Stomach (tissue), 19 donors: ENCODE measurements at regions of chr12 and their contacts with region 1.

Region 1: DNA sequence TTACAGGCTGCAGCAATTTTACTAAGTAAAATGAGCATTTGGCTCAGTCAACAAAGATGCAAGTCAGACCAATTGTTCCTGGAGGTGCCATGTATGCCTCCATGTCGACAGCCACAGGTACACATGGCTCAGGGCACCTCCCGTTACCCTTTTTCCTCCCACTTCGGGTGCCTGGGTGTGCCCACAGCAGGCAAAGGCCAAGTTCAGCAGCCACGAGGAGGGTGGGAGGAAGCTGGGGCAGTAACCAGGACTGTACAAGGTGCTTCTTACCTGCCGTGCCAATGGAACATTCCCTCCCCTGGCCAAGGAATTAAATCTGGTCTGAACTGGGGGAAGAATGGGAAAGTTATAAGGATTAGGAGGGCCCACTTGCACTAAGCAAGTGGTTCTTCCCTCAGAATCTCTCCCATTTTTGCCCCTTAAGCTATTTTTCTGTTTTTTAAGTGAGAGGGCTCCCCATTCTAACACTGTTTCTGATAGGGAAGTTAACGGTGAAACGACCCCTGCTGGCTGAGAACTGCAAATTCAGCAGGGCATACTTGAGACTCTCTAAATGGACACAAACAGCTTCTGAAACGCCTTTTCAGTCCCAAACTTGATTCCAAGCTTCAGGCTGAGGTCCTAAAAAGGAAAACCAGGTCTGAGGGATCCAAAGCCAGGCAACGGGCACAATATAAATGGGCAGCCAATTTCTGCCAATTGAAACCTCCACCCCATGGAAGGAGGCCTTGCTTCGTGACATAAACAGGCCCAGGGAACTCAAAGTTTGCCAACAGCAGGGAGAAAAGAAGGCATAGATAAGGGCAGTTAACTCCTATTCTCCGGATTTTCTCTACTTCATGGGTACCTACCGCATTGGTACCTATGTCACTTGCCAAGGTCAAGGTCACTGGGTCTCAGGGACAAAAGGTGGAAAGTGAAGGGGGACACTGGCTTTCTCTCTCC is 24.8 kb downstream of the CLECL1 start:
- DNase-seq: peak; percentile 58 to 72
- H3K4me3 ChIP-seq: no peak overlapping the region
- H3K27ac ChIP-seq: peak overlapping the region in 3 of 5 donors; percentile 28 to 44 (median 35)
- H3K4me1 ChIP-seq: peaks cover 0 to 14% (median 2%) of the 10 kb centered on the region in 4 donors
- H3K27me3 ChIP-seq: no peaks in the 10 kb centered on the region
- CTCF ChIP-seq: peak in 5 of 7 experiments; percentile 68 to 82 (median 76)
- EP300 ChIP-seq: no peak
- POLR2A ChIP-seq: no peak

Region 2: DNA sequence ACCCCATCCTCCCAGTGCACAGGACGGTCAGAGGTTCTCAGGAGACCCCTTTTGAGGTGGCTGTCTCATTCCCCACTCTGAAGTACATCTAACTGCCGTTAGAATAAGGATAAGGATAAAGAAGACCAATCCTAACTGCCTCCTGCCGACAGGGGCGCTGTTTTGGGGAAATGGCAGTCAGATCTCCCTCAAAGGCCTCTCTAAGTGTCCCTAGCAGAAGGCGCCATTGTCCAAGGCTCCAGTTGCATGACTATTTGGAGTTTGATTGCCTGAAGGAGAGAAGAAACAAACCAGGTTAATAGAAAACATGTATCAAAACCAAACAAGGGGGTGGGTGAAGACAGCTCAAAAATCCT is 71.3 kb before region 1 on chr12:
- intact Hi-C with region 1: loop called (anchors 5 kb)
- DNase-seq: no peak
- H3K4me3 ChIP-seq: no peak overlapping the region
- H3K27ac ChIP-seq: no peak overlapping the region
- H3K4me1 ChIP-seq: peaks cover 0 to 12% (median 0%) of the 10 kb centered on the region in 4 donors
- H3K27me3 ChIP-seq: no peaks in the 10 kb centered on the region
- CTCF ChIP-seq: no peak
- EP300 ChIP-seq: no peak
- POLR2A ChIP-seq: no peak

Region 3: GRCh38 chr12:10293570-10294227 is 585.6 kb after region 1 on chr12:
- intact Hi-C with region 1: no loop called
- DNase-seq: peak in 1 of 2 donors; percentile 36
- H3K4me3 ChIP-seq: no peak overlapping the region
- H3K27ac ChIP-seq: no peak overlapping the region
- H3K4me1 ChIP-seq: no peaks in the 10 kb centered on the region
- H3K27me3 ChIP-seq: no peaks in the 10 kb centered on the region
- CTCF ChIP-seq: no peak
- EP300 ChIP-seq: no peak
- POLR2A ChIP-seq: no peak